A549 (cell line): ENCODE measurements at regions of chr18 and their contacts with region 1.

Region 1: GRCh38 chr18:49858309-49859020 is 45.1 kb upstream of the ACAA2 start:
- DNase-seq: peak; percentile 56 to 75
- ATAC-seq: peak; percentile 90 to 93
- H3K4me3 ChIP-seq: no peak overlapping the region
- H3K27ac ChIP-seq: peak overlapping the region; percentile 83 to 91
- H3K4me1 ChIP-seq: peaks cover 17% of the 10 kb centered on the region
- CTCF ChIP-seq: peak; percentile 88
- EP300 ChIP-seq: no peak
- POLR2A ChIP-seq: no peak
- RAD21 ChIP-seq: peak; percentile 94 to 96

Region 2: GRCh38 chr18:49510393-49511115 is 347.9 kb before region 1 on chr18:
- CTCF ChIA-PET with region 1: interaction called, 176 read pairs
- POLR2A ChIA-PET with region 1: interaction called, 6 read pairs
- DNase-seq: peak; percentile 48 to 54
- ATAC-seq: peak; percentile 90 to 92
- H3K4me3 ChIP-seq: no peak overlapping the region
- H3K27ac ChIP-seq: no peak overlapping the region
- H3K4me1 ChIP-seq: no peaks in the 10 kb centered on the region
- CTCF ChIP-seq: peak; percentile 77
- EP300 ChIP-seq: no peak
- POLR2A ChIP-seq: no peak
- RAD21 ChIP-seq: peak; percentile 88 to 91

Region 3: DNA sequence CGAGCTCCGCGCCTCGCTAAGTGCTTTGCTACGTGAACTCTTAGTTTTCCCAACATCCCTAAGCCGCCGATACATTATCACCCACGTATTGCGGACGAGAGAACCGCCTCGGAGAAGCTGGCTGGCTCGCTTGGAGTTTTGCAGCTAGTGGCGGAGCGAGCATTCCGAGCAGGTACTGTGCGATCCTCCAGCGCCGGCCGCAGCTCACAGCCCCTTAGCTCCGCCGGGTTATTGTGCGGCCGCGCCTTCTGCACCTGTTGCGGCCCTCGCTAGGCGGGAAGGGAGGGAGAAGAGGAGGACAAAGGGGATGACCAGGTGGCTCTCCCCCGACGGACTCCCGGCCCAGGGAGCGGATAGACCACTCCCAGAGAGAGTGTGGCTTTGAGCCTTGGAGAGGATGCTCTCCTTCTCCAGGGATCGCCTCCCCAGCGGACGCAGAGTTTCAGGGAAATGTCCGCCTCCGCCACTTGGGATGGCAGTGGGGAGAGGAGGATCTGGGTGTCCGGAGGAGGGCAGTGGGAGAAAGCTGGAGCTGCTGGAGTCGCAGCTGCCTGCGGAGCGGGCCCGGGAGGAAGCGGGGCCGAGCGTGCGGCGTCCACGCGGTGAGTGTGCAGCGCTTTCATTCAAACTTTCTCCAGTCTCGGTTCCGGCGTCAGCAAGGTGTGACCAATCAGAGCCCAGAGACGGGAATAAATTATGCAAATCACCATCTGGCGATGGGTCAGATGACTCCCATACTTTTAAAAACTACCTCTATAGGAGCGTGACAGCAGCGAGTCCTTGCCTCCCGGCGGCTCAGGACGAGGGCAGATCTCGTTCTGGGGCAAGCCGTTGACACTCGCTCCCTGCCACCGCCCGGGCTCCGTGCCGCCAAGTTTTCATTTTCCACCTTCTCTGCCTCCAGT is 296.9 kb before region 1 on chr18 and contains the start of gene LIPG:
- CTCF ChIA-PET with region 1: interaction called, 47 read pairs
- POLR2A ChIA-PET with region 1: interaction called, 3 read pairs
- DNase-seq: peak; percentile 25 to 36
- ATAC-seq: peak; percentile 63 to 70
- H3K4me3 ChIP-seq: peak within 1 kb of the TSS; percentile 45
- H3K27ac ChIP-seq: peak within 1 kb of the TSS; percentile 37 to 48; a peak in 4 of 6 replicates
- H3K4me1 ChIP-seq: peaks cover 10% of the 10 kb centered on the region; the same call in 2 of the 3 replicates
- CTCF ChIP-seq: no peak
- EP300 ChIP-seq: no peak
- POLR2A ChIP-seq: no peak
- RAD21 ChIP-seq: no peak
- polyA plus RNA-seq, gene LIPG: 0.61 and 0.65 TPM in 2 replicates

Region 4: GRCh38 chr18:49813319-49814146 is 44.9 kb before region 1 on chr18 and contains the start of gene ACAA2:
- CTCF ChIA-PET with region 1: interaction called, 14 read pairs
- POLR2A ChIA-PET with region 1: interaction called, 7 read pairs
- DNase-seq: peak; percentile 35 to 80
- ATAC-seq: peak; percentile 92 to 94
- H3K4me3 ChIP-seq: peak within 1 kb of the TSS; percentile 85
- H3K27ac ChIP-seq: peak within 1 kb of the TSS; percentile 92 to 97
- H3K4me1 ChIP-seq: peaks cover 14% of the 10 kb centered on the region
- CTCF ChIP-seq: no peak
- EP300 ChIP-seq: no peak
- POLR2A ChIP-seq: peak; percentile 37; the same call in 1 of the 2 replicates
- RAD21 ChIP-seq: no peak
- polyA plus RNA-seq, gene ACAA2: 30.9 and 40.0 TPM in 2 replicates

Region 5: DNA sequence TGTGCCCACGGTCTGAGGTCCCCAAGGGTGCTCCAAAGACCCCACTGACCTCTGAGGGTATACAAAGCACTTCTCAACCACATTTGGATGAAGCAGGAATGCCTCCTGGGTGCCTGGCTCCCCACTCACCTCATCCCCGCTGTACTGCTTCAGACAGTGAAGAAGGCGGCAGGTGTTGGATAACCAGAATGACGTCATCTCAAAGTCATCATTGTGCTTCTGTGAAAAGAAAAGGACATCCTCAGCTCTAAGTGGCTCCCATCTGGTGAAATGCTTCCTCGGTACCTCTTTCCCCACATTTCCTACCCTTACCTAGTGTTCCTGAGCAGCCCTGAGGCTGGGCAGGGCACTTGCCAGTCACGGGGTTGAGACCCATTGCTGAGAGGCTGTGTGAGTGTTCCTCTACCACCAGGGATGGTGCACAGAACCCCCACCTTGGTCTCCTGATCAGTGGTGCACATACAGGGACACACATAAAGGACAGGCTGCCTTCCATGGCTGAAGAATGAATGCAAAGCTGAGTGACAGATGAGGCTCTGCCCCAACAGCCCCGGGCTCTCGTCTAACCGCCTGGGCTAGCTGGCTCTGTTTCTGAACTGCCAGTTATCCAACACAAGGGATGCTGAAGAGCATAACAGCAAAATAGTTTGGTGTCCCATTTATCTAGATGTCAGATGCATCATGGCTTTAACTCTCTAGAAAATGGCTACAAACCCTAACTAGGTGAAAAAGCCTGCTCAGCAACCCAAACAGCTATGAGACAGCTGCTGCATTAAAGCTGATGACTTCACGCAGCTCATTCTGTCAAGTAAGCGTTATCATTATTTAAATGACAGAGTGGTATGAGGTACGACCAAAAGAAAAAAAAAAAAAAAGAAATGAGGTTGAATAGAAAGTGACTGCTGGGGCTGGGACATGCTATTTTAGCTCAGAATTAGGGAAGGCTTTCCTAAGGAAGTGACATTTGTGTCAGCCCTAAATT is 16.9 kb before region 1 on chr18:
- CTCF ChIA-PET with region 1: interaction called, 17 read pairs
- POLR2A ChIA-PET with region 1: no interaction called
- DNase-seq: no peak
- ATAC-seq: no peak
- H3K4me3 ChIP-seq: no peak overlapping the region
- H3K27ac ChIP-seq: no peak overlapping the region
- H3K4me1 ChIP-seq: peaks cover 23% of the 10 kb centered on the region
- CTCF ChIP-seq: no peak
- EP300 ChIP-seq: no peak
- POLR2A ChIP-seq: no peak
- RAD21 ChIP-seq: no peak